Motor neuron (in vitro differentiated cells): ENCODE measurements at regions of chr4 and their contacts with region 1.

Region 1: GRCh38 chr4:77385124-77385969 is 220.3 kb upstream of the CXCL13 start:
- ATAC-seq: peak; percentile 56 to 95 (median 76)
- H3K4me3 ChIP-seq: no peak overlapping the region
- H3K27ac ChIP-seq: no peak overlapping the region
- H3K4me1 ChIP-seq: no peaks in the 10 kb centered on the region

Region 2: GRCh38 chr4:77433418-77433733 is 48.0 kb after region 1 on chr4:
- in situ Hi-C with region 1: loop called in 2 of 9 experiments (anchors 10 kb)
- ATAC-seq: peak in 7 of 8 experiments; percentile 32 to 93 (median 44)
- H3K4me3 ChIP-seq: no peak overlapping the region
- H3K27ac ChIP-seq: no peak overlapping the region
- H3K4me1 ChIP-seq: no peaks in the 10 kb centered on the region

Region 3: GRCh38 chr4:77600521-77601451 is 215.4 kb after region 1 on chr4:
- in situ Hi-C with region 1: loop called in 5 of 9 experiments (anchors 10 to 25 kb)
- ATAC-seq: peak in 4 of 8 experiments; percentile 52 to 68 (median 60)
- H3K4me3 ChIP-seq: no peak overlapping the region
- H3K27ac ChIP-seq: no peak overlapping the region
- H3K4me1 ChIP-seq: no peaks in the 10 kb centered on the region

Region 4: DNA sequence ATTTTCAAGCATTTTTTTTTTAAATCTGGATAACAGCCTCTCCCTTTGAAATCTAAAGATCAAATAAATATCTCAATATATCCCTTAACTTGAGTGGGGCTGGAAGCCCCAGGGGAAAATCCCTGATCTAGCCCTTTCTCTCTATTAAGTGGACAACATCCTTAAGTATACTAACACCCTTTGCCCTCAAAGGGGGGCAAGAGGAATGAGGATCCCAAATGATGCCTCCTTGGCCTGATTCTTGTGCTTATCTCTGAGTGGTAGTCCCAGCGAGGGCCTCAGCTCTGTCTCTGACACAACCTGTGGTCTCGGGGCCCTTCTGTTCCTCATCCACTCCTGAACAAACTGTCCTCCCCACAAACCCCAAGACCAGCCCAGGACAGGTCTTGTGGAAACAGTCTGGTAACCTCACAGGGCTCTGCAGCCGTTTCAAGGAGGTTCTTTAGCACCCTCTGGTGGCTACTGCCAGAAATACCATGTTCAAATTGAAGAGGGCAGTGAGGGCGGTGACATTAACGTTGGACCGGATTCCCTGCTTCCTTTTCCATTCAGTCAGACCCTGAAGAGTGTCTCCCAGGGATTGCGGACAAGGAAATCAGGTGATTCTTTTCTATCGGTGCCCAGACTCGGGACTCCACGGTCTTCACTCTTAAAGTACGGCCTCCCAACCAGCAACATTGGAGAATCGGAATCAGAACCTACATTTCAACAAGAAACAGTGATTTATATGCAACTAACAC is 233.2 kb after region 1 on chr4:
- in situ Hi-C with region 1: loop called in 4 of 9 experiments (anchors 25 kb)
- ATAC-seq: peak; percentile 84 to 99 (median 92)
- H3K4me3 ChIP-seq: no peak overlapping the region
- H3K27ac ChIP-seq: no peak overlapping the region
- H3K4me1 ChIP-seq: no peaks in the 10 kb centered on the region